Mucosa of descending colon (tissue), 3 donors: ENCODE measurements at regions of chr1 and their contacts with region 1.

Region 1: GRCh38 chr1:227489572-227489971 is 73.8 kb upstream of the ZNF678 start:
- DNase-seq: no peak
- ATAC-seq: no peak
- H3K4me3 ChIP-seq: no peak overlapping the region
- H3K4me1 ChIP-seq: no peaks in the 10 kb centered on the region
- CTCF ChIP-seq: no peak

Region 2: DNA sequence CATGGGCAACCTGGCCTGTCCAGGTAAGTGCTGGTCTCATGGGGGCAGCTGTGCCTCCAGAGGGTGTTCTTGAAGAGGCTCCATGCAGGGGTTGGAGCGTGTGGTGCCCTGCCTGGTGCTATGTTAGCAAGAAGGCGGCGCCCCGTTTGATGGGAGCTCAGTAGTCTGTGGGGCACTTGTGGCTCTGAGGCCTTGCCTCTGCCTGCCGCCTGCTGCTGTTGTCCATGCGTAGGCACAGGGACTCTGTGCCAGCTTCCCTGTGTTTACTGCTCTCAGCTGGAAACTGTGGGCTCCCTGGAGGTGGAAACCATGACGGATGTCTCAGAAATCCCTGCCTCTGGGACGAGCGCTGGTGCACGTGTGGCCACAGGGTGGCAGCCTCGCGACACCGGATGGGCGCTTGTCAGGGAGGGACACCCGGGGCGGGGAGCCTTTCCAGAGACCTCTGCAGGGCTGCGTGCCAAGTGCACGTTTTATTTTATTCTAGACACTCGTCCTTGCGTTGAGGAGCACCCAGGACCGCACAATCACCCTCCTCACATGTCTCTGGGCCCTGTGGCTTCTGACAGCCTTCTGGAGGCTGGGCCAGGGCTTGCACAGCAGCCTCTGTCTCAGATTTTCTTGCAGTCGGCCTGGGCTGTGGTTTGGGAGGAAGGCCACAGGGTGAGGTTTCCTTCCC is 272.8 kb after region 1 on chr1:
- intact Hi-C with region 1: loop called in 1 of 2 experiments (anchors 10 kb)
- DNase-seq: peak; percentile 89 to 91 (median 89)
- ATAC-seq: peak; percentile 86
- H3K4me3 ChIP-seq: no peak overlapping the region
- H3K4me1 ChIP-seq: peaks cover 21% of the 10 kb centered on the region
- CTCF ChIP-seq: peak; percentile 80